ENCODE measurements at regions of chr3 and their contacts with region 1.

Region 1: GRCh38 chr3:188712248-188712924 is 459.4 kb upstream of the TPRG1 start:
- DNase-seq: peak in 1 of 2 experiments; percentile 59
- H3K4me3 ChIP-seq: no peak overlapping the region
- H3K27ac ChIP-seq: 0 out of 2 replicates have a peak overlapping the region, but pooled peaks have one; percentile 0
- H3K4me1 ChIP-seq: peaks cover 9% of the 10 kb centered on the region
- H3K27me3 ChIP-seq: no peaks in the 10 kb centered on the region
- CTCF ChIP-seq: no peak

Region 2: DNA sequence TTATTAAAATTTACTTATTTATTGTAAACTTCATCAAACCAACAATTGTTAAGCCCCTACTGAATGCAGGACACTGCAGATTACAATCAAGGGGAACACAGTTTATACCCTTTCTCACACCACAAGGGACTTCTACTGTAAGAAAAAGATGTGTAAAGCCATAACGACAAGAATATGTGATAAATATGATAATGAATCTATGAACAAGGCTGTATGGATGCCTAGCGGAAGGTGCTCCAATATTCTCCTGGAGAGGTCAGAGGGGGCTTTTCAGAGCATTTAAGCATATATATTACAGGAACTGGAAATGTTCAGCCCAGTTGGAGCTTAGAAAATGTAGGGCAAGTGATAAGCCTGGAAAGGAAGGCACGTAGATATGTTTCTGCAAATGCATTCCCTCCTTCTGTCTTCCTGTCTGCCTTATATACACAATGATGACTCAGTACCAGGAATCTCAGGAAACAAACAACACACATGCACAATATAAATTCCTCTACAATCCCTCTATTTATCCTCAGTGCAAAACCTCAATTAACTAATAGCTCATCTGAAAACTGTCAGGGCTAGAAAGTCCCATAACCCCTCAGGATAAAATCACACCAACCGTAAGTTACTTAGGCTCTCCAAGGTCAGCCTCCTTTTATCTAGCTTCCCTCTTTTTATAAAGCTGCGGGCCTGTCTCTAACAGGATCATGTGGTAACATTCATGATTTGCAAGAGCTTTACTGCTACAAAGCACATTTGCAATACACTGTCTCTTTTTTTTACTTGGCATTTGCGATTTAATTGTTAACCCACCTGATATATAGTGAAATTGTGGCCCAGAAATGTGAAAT is 165.3 kb before region 1 on chr3:
- CTCF ChIA-PET with region 1: no interaction called
- POLR2A ChIA-PET with region 1: no interaction called
- intact Hi-C with region 1: no loop called
- DNase-seq: peak; percentile 4 to 86
- H3K4me3 ChIP-seq: no peak overlapping the region
- H3K27ac ChIP-seq: peak overlapping the region; percentile 13
- H3K4me1 ChIP-seq: peaks cover 16% of the 10 kb centered on the region
- H3K27me3 ChIP-seq: no peaks in the 10 kb centered on the region
- CTCF ChIP-seq: no peak

Region 3: GRCh38 chr3:188701485-188701969 is 10.9 kb before region 1 on chr3:
- CTCF ChIA-PET with region 1: interaction called, 15 read pairs
- POLR2A ChIA-PET with region 1: no interaction called
- intact Hi-C with region 1: no loop called
- DNase-seq: no peak
- H3K4me3 ChIP-seq: no peak overlapping the region
- H3K27ac ChIP-seq: no peak overlapping the region
- H3K4me1 ChIP-seq: no peaks in the 10 kb centered on the region
- H3K27me3 ChIP-seq: no peaks in the 10 kb centered on the region
- CTCF ChIP-seq: no peak

Region 4: DNA sequence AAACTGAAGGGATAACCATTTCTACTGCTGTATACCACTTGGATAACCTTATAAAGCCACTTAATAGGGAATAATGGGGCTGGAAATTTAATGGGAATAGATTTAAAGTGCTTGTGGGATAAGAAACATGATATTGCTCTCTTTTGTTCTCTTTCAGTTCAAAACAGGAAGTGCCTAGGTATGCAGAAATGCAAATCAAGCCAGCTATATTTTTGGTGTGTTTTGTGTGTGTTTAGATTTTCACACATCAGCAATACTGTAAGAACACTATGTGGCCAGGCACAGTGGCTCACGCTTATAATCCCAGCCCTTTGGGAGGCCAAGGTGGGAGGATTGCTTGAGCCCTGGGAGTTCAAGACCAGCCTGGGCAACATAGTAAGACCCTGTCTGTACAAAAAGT is 17.0 kb after region 1 on chr3:
- CTCF ChIA-PET with region 1: no interaction called
- POLR2A ChIA-PET with region 1: interaction called, 14 read pairs
- intact Hi-C with region 1: no loop called
- DNase-seq: no peak
- H3K4me3 ChIP-seq: no peak overlapping the region
- H3K27ac ChIP-seq: no peak overlapping the region
- H3K4me1 ChIP-seq: peaks cover 8% of the 10 kb centered on the region; the same call in 1 of the 2 replicates
- H3K27me3 ChIP-seq: no peaks in the 10 kb centered on the region
- CTCF ChIP-seq: no peak

Region 5: GRCh38 chr3:188853856-188854771 is 141.7 kb after region 1 on chr3:
- CTCF ChIA-PET with region 1: no interaction called
- POLR2A ChIA-PET with region 1: no interaction called
- intact Hi-C with region 1: no loop called
- DNase-seq: no peak
- H3K4me3 ChIP-seq: no peak overlapping the region
- H3K27ac ChIP-seq: no peak overlapping the region
- H3K4me1 ChIP-seq: no peaks in the 10 kb centered on the region
- H3K27me3 ChIP-seq: no peaks in the 10 kb centered on the region
- CTCF ChIP-seq: no peak